K562 (cell line): ENCODE measurements at regions of chr7 and their contacts with region 1.

Region 1: DNA sequence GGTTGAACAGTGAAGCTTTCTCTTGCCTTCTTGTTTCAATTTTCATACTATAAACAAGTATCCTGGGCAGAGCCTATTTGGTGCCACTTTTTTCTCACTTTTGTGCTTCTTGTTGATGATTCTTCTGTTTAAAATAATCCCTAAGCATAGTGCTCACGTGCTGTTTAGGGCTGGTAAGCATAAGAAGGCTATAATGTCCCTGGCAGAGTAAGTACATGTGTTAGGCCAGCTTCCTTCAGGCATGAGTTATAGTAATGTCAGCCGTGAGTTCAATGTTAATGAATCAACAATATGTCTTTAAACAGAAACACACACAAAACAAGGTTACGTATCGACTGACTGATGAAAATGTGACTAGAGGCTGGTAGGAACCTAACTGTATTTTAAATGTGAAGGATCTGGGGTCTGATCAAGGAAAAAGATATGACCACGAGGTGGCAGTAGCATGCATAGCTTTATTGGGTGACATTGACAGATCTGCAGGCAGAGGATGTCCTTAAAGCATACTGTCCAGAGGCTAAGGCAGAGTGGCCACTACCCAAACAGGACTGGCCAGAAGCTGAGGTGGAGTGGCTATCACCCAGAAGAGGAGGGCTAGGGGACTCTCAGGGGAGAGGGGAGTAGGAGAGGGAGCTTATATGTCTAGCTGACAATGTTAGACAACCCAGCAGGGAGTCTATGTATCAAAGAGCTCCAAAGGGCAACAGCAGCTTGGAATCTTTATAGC is 113.7 kb downstream of the BRAF start:
- DNase-seq: peak; percentile 52 to 87 (median 68)
- ATAC-seq: peak; percentile 99
- H3K4me3 ChIP-seq: no peak overlapping the region
- H3K27ac ChIP-seq: no peak overlapping the region
- H3K4me1 ChIP-seq: no peaks in the 10 kb centered on the region
- H3K27me3 ChIP-seq: no peaks in the 10 kb centered on the region
- CTCF ChIP-seq: peak; percentile 78 to 93 (median 90)
- EP300 ChIP-seq: no peak; the same call in 1 of the 2 replicates
- POLR2A ChIP-seq: no peak
- RAD21 ChIP-seq: peak; percentile 84 to 92

Region 2: DNA sequence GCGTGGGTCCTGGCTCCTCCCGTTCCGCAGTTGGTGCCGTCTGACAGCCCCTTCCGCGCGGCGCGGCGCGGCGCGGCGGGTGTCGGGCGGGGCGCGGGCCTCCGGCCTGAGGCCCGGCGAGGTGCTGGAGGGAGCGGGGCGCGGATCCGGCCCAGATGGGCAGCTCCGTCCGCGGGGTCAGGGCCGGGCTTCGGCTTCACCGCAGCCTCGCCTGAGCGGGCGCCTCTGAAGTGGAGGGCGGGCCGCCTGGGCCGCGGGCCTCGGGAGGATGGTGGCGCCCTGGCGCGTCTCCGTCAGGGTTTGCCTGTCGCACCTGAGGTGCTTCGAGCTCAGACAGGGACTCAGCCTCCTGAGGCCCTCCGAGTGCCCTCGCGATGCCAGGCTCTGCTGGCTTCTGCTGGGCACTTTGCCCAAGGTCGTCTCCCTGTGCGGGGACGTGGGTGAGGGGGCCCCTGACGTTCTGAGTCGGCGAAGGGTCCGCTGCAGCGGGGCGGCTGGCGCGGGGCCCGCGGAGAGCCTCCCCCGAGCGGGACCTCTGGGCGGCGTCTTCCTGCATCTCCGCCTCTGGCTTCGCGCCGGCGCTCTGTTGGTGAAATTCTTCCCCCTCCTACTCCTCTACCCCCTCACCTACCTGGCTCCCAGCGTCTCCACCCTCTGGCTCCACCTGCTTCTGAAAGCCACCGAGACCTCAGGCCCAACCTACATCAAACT is 137.8 kb before region 1 on chr7:
- CTCF ChIA-PET with region 1: interaction called, 3 read pairs
- POLR2A ChIA-PET with region 1: no interaction called
- in situ Hi-C with region 1: no loop called
- intact Hi-C with region 1: loop called (anchors 1 kb)
- DNase-seq: peak; percentile 62 to 77 (median 70)
- ATAC-seq: peak; percentile 79
- H3K4me3 ChIP-seq: peak overlapping the region; percentile 77
- H3K27ac ChIP-seq: peak overlapping the region; percentile 57; the same call in 2 of the 3 replicates
- H3K4me1 ChIP-seq: peaks cover 24 to 34% of the 10 kb centered on the region in 2 experiments; a peak in 4 of 5 replicates
- H3K27me3 ChIP-seq: no peaks in the 10 kb centered on the region
- CTCF ChIP-seq: no peak; a peak in 1 of 6 replicates
- EP300 ChIP-seq: no peak
- POLR2A ChIP-seq: peak; percentile 48; the same call in 1 of the 2 replicates
- RAD21 ChIP-seq: no peak

Region 3: DNA sequence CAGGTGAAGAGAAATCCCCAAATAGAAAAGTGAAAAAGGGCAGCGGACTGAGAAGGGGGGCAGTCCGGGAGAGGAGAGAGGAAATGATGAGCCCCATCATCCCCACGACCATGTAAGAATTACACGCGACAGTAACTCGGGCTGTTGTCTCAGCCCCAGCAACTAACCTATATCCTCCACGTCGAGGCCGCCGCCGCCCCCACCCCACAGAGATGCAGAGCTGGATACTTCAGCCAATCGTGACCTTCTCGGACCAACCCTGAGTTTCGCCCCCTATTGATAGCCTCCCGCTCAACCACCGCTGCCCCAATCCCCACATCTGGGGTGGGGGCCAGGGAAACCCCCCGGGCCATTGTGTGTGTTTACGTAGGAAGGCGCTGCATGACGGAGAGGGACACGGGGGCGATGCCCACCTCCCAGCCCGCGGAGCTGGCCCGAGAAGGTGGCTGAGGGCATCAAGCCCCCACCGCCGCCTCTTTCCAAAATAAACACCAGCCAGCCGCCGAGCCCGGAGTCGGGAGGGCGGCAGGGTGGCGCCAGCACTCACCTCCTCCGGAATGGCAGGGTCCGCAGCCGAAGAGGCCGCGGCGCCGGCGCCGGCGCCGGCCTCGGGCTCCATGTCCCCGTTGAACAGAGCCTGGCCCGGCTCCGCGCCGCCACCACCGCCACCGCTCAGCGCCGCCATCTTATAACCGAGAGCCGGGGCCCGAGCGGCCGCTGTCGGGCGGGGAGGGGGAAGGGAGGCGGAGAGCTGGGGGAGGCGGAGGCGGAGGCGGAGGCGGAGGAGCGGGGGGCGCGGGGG is 113.2 kb after region 1 on chr7:
- CTCF ChIA-PET with region 1: no interaction called
- POLR2A ChIA-PET with region 1: no interaction called
- in situ Hi-C with region 1: no loop called
- intact Hi-C with region 1: loop called (anchors 1 kb)
- DNase-seq: peak; percentile 74 to 92 (median 84)
- ATAC-seq: peak; percentile 96
- H3K4me3 ChIP-seq: peak overlapping the region; percentile 91
- H3K27ac ChIP-seq: peak overlapping the region; percentile 93
- H3K4me1 ChIP-seq: peaks cover 0 to 3% of the 10 kb centered on the region in 2 experiments; a peak in 2 of 5 replicates
- H3K27me3 ChIP-seq: no peaks in the 10 kb centered on the region
- CTCF ChIP-seq: peak; percentile 59 to 80 (median 71); a peak in 5 of 6 replicates
- EP300 ChIP-seq: no peak
- POLR2A ChIP-seq: peak; percentile 66
- RAD21 ChIP-seq: peak in 1 of 2 experiments; percentile 7; a peak in 2 of 4 replicates

Region 4: DNA sequence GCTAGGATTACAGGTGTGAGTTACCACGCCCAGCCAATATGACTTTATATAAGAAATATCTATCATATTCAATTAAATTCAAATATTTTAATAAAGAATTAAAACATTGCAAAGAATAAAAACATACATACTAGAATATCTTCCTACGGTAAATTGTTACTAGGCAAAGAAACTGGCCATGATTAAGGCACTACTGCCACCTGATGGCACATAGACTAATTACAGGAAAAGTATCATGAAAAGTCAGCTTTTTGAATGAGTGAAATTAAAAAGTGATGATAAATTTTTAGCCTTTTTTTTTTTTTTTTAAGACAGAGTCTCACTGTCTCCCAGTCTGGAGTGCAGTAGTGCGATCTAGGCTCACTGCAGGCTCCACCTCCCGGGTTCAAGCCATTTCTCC is 172.8 kb after region 1 on chr7:
- CTCF ChIA-PET with region 1: interaction called, 15 read pairs
- POLR2A ChIA-PET with region 1: no interaction called
- in situ Hi-C with region 1: no loop called
- intact Hi-C with region 1: loop called (anchors 2 kb)
- DNase-seq: peak; percentile 52 to 57 (median 54)
- ATAC-seq: no peak
- H3K4me3 ChIP-seq: no peak overlapping the region
- H3K27ac ChIP-seq: no peak overlapping the region
- H3K4me1 ChIP-seq: no peaks in the 10 kb centered on the region
- H3K27me3 ChIP-seq: 0 out of 5 replicates have a peak, but pooled peaks cover 3% of the 10 kb centered on the region in 2 experiments
- CTCF ChIP-seq: peak in 2 of 3 experiments; percentile 46 to 80; a peak in 4 of 6 replicates
- EP300 ChIP-seq: no peak
- POLR2A ChIP-seq: no peak
- RAD21 ChIP-seq: peak; percentile 60 to 80

Region 5: DNA sequence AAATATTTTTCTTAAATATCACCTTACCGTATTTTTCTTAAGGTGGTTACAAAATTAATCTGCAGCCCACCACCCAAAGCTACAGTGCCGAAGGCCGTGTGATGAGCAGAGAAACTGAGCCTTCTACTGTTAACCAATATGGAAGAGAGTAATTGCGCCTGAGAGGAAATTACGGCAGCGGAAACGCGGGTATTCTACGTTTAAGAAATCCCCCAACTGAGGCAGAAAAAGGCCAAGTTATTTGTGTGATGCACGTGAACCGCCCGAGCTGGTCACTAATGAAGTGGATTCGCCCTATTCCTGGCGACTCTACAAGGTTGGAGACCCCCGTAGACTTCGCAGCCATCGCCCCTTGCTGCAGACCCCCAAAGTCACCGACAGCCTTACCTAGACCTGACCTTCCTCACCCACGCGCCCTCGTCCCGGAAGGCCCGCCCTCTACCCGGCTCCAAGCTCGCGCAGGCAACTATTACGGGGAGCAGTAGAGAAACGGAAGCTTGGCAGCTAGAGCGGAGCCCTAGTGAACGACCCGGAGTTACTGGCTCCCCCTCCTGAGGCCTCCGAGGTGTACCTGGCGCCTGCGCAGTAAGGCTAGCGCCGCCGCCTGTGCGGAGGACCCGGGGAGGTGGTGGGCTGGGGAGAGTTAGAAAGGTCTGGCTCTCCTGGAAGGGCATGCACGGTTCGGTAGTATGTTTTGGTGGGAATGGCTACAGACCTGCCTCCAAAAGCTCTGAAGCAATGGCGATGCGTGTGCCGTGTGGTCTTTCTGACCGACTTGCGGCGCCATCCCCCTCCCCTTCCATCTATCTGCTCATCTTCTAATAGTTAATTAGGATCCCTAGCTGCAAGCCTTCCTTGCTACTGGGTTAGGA is 203.8 kb after region 1 on chr7 and contains the start of gene MRPS33:
- CTCF ChIA-PET with region 1: interaction called, 22 read pairs
- POLR2A ChIA-PET with region 1: no interaction called
- in situ Hi-C with region 1: loop called (anchors 5 kb)
- intact Hi-C with region 1: loop called (anchors 1 kb)
- DNase-seq: peak; percentile 99
- ATAC-seq: peak; percentile 99
- H3K4me3 ChIP-seq: peak within 1 kb of the TSS; percentile 53
- H3K27ac ChIP-seq: peak within 1 kb of the TSS; percentile 80
- H3K4me1 ChIP-seq: peaks cover 8 to 21% of the 10 kb centered on the region in 2 experiments; a peak in 2 of 5 replicates
- H3K27me3 ChIP-seq: peaks cover 0 to 2% of the 10 kb centered on the region in 2 experiments; a peak in 1 of 5 replicates
- CTCF ChIP-seq: peak; percentile 92 to 96 (median 96)
- EP300 ChIP-seq: peak; percentile 72
- POLR2A ChIP-seq: peak; percentile 99
- RAD21 ChIP-seq: peak in 1 of 2 experiments; percentile 24; a peak in 1 of 4 replicates
- polyA plus RNA-seq, gene MRPS33: 395 to 442 TPM

Region 6: DNA sequence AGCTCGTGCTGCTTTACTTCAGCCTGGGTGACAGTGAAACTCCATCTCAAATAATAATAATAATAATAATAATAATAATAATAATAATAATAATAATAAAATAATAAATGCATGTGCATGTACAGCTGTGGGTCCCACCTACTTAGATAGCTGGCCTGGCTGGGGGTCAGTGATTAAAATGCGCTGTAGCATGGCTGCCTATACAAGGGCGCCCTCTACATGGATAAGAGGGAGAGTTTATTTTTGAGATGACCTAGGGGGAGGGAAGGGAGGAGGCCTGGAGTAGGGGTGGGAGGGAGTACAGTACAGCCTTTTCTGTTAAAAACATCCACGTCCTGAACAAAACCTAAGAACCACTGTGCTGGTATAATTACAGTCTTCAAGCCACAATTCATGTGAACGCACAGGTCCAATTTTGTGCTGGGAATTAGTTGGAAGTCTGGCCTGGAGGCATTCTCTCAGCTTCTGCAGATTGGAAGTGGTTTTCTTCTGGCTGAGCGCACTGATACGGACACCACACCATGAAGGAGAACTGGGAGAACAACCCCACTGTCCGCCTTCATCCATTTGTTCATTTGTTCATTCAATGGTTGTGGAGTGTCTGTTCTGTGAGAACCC is 409.4 kb after region 1 on chr7:
- CTCF ChIA-PET with region 1: interaction called, 3 read pairs
- POLR2A ChIA-PET with region 1: no interaction called
- in situ Hi-C with region 1: no loop called
- intact Hi-C with region 1: loop called (anchors 1 kb)
- DNase-seq: peak; percentile 52 to 77 (median 72)
- ATAC-seq: peak; percentile 94
- H3K4me3 ChIP-seq: no peak overlapping the region
- H3K27ac ChIP-seq: no peak overlapping the region
- H3K4me1 ChIP-seq: no peaks in the 10 kb centered on the region
- H3K27me3 ChIP-seq: peaks cover 0 to 18% of the 10 kb centered on the region in 2 experiments; a peak in 3 of 5 replicates
- CTCF ChIP-seq: peak; percentile 51 to 72 (median 66)
- EP300 ChIP-seq: no peak
- POLR2A ChIP-seq: no peak
- RAD21 ChIP-seq: peak in 1 of 2 experiments; percentile 61; a peak in 3 of 4 replicates

Region 7: DNA sequence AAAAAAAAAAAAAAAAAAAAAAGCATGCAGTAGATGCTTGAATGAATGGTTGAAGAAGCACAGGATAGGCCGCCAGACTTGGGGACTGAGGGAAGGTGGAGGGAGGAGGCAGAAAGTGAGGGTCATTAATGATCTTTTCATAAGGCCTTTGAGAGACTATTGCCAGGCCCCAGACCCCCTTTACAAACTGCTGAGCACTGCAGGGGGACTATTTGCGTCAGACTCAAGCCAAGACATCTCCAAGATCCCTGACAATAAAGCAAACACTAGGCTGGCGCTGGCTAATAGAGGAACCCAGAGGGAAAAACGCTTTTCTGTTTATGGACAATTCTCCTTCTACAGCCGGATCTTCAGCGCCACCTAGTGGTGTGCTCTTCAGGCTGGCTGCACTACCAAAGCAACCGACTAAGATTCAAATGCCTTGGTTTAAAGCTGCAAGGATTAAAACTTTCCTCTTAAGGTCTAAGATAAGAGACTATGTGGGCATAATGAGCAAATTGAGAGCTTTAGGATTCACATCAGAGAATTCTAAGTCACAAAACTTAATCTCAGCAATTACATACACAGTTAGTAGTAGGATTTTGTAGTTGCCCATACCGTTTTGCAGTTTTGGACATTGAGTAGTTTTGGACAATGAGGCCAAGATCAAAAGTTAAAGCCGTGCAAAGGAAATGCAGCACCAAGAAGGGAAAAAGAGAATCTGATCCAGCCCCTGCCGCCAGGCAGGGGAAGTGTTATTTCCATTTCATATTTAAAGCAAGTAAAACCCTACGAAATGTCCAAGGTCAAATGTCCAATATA is 722.4 kb after region 1 on chr7:
- CTCF ChIA-PET with region 1: no interaction called
- POLR2A ChIA-PET with region 1: no interaction called
- in situ Hi-C with region 1: loop called (anchors 25 kb)
- intact Hi-C with region 1: loop called (anchors 1 kb)
- DNase-seq: peak; percentile 79 to 83 (median 81)
- ATAC-seq: peak; percentile 96
- H3K4me3 ChIP-seq: no peak overlapping the region
- H3K27ac ChIP-seq: no peak overlapping the region
- H3K4me1 ChIP-seq: no peaks in the 10 kb centered on the region
- H3K27me3 ChIP-seq: peaks cover 10% of the 10 kb centered on the region in 2 experiments
- CTCF ChIP-seq: peak; percentile 90 to 97 (median 97)
- EP300 ChIP-seq: no peak
- POLR2A ChIP-seq: no peak
- RAD21 ChIP-seq: peak; percentile 82 to 91